Dorsolateral prefrontal cortex (tissue), 120 donors: ENCODE measurements at regions of chr2 and their contacts with region 1.

Region 1: GRCh38 chr2:85420536-85421259 is 2.2 kb downstream of the SH2D6 start:
- DNase-seq: peak; percentile 86 to 94 (median 90)
- H3K4me3 ChIP-seq: peak overlapping the region in 53 of 59 donors; percentile 1 to 55 (median 26)
- H3K27ac ChIP-seq: peak overlapping the region; percentile 67 to 99 (median 97)
- H3K27me3 ChIP-seq: no peaks in the 10 kb centered on the region
- CTCF ChIP-seq: peak; percentile 99 to 100 (median 100)

Region 2: GRCh38 chr2:85042330-85042729 is 378.4 kb before region 1 on chr2:
- intact Hi-C with region 1: no loop called
- DNase-seq: no peak
- H3K4me3 ChIP-seq: no peak overlapping the region
- H3K27ac ChIP-seq: no peak overlapping the region
- H3K27me3 ChIP-seq: no peaks in the 10 kb centered on the region
- CTCF ChIP-seq: no peak

Region 3: GRCh38 chr2:85354286-85355072 is 66.2 kb before region 1 on chr2 and contains the starts of genes ELMOD3 and RETSAT:
- intact Hi-C with region 1: loop called (anchors 2 to 5 kb)
- DNase-seq: peak; percentile 81 to 97 (median 96)
- H3K4me3 ChIP-seq: peak within 1 kb of the TSS; percentile 58 to 100 (median 88)
- H3K27ac ChIP-seq: peak within 1 kb of the TSS in 57 of 59 donors; percentile 23 to 95 (median 83)
- H3K27me3 ChIP-seq: no peaks in the 10 kb centered on the region
- CTCF ChIP-seq: peak in 41 of 56 donors; percentile 8 to 57 (median 33)
- total RNA-seq, gene ELMOD3: 17.1 to 43.7 (median 29.2) TPM
- total RNA-seq, gene RETSAT: 19.8 to 54.2 (median 39.0) TPM

Region 4: DNA sequence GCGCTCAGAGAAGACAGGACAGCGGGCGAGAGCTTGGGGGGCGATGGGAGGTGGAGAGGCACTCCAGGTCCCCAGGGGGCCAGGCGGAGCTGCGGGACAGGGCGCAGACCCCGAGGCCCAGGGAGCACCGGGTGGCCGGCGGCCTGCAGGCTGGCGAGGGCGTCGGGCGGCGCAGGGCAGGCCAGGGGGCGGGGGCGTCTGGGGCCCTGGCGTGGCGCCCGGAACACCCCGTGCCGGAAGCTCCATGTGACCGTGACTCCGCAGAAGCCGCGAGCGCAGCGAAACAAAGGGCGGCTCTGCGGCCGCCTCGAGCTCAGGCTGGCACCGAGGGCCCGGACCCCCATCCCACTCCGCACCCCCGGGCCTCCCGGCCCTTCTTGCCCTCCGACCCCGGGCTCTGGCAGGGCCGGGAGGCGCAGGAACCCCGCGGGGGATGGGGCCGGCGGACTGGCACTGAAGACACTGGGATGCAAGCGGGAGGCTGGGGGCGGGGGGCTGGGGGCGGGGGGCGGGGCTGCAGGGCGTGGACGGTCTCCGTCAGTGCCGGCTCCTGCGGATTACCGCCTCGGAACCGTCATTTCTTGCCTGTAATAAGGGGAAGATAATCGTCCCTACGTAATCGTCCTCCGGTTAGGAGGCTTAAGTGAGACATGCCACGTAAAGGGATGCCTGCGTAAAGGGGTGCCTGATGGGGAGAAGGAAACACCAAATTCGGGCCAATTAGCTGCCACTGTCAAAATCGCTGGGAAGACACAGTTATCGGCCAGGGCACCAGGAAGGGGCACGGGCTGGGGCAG is 17.0 kb after region 1 on chr2:
- intact Hi-C with region 1: loop called in 1 of 2 experiments (anchors 2 kb)
- DNase-seq: peak; percentile 63 to 93 (median 86)
- H3K4me3 ChIP-seq: peak overlapping the region; percentile 5 to 63 (median 45)
- H3K27ac ChIP-seq: peak overlapping the region; percentile 86 to 100 (median 100)
- H3K27me3 ChIP-seq: no peaks in the 10 kb centered on the region
- CTCF ChIP-seq: peak in 20 of 56 donors; percentile 4 to 31 (median 22)

Region 5: DNA sequence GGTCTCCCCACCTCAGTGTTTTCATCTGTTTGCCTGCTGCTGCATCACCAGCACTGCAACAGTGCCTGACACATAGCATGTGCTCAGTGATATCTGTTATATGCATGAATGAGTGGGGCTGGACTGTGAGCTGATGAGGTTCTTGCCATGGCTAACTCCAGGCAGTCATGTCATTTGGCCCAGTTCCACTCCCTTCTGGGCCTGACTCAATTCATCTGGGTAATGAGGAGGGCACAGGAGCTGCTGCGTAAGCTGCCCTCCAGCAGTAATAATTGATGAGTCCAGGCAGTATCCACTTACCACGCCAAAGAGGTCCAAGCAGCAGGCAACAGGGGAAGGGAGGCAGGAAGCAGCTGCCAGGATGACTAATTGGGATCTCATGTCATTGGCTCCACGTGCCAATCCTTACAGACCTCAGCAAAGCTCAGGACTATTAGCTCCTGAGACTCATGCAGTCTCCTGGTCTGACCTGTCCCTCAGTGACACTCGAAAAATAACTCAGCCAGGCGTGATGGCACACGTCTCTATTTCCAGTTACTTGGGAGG is 84.2 kb after region 1 on chr2:
- intact Hi-C with region 1: no loop called
- DNase-seq: peak in 1 of 10 donors; percentile 41
- H3K4me3 ChIP-seq: no peak overlapping the region
- H3K27ac ChIP-seq: peak overlapping the region in 1 of 59 donors; percentile 9
- H3K27me3 ChIP-seq: no peaks in the 10 kb centered on the region
- CTCF ChIP-seq: no peak

Region 6: DNA sequence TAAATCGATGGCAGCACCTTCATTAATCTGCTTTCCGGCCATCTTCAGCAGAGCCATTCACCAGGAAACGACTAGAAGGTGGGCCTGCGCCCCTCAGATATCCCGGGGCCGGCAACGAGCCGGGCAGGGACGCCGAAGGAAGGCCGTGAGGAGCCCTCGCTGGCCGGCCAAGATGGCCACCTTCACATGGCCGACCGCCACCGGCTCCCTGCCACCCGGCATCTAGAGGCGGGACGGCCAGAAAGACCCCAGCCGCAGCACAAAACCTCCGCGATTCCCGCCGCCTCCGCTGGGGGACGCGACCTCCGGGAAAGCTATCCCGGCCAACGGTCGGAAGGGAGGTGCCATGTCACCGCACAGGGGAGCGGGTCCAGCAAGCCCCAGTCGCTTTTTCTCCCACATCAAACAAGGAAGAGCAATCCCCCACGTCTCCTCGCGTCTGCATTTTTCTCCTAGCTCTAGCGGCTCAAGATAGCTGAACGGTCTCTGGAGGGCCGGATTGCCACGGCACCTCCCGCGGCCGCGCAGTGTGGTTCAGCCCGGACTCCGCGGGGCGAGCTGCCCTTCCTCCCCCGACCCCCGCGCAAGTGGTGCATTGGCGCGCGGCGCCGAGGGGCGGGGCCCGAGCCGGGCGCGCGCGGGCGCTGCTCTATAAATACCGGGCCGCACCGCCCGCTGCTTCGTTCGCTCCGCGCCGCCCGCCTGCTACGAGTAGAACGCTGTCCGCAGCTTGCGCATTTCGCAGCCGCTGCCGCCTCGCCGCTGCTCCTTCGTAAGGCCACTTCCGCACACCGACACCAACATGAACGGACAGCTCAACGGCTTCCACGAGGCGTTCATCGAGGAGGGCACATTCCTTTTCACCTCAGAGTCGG is 118.0 kb after region 1 on chr2 and contains the start of gene MAT2A:
- intact Hi-C with region 1: loop called (anchors 1 kb)
- DNase-seq: peak; percentile 83 to 95 (median 90)
- H3K4me3 ChIP-seq: peak within 1 kb of the TSS; percentile 76 to 100 (median 96)
- H3K27ac ChIP-seq: peak within 1 kb of the TSS; percentile 95 to 100 (median 100)
- H3K27me3 ChIP-seq: no peaks in the 10 kb centered on the region
- CTCF ChIP-seq: peak; percentile 53 to 87 (median 72)
- total RNA-seq, gene MAT2A: 193 to 562 (median 276) TPM

Region 7: DNA sequence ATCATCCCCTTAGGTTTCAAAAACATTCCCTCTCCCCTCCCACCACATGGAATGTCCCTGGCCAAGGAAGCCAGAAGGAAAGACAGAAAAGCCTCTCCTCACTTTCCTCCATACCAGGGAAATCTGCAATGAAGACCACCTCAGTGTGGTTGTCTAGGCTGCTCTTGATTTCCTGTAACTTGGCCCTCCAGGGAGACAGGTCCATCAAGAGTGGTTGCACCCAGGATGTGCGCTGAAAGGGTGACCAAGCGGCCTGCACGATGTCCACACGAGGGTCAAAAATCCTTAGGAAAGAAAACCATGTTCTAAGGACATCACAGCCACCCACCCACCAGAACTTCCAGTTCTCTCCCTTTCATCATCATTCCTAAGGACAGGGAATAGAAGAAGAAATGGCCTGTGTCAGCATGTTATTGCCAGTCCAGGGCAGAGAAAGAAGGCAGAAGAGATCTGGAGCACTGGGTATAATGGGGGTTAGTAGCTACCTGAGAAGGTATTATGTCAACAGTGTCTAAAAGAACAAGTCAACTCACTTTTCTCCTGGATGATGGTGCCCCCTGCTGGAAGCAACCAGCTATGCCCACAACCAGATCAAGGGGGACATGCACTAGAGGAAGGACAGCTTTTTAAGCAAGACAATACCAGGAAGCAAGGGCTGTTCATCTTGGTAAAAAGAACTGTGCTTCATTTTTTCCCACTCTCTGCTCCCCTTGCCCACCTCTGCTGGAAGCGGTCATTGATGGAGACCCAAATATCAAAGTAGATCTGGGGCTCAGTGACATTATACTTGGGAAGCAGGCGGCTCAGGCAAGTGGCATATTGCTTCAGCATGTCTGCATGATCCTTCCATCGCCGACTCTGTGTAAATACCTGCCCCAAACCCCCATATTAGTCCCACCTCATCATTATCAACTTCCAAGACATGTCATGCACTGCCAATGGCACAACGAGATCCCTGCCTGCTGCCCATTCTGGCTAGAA is 131.3 kb after region 1 on chr2:
- intact Hi-C with region 1: loop called (anchors 1 to 2 kb)
- DNase-seq: peak; percentile 65 to 88 (median 80)
- H3K4me3 ChIP-seq: no peak overlapping the region
- H3K27ac ChIP-seq: peak overlapping the region in 49 of 59 donors; percentile 13 to 73 (median 50)
- H3K27me3 ChIP-seq: no peaks in the 10 kb centered on the region
- CTCF ChIP-seq: peak; percentile 84 to 99 (median 96)

Region 8: GRCh38 chr2:85602476-85603234 is 182.0 kb after region 1 on chr2 and contains the start of gene TMEM150A:
- intact Hi-C with region 1: loop called in 1 of 2 experiments (anchors 5 kb)
- DNase-seq: peak; percentile 87 to 97 (median 94)
- H3K4me3 ChIP-seq: peak within 1 kb of the TSS; percentile 66 to 96 (median 84)
- H3K27ac ChIP-seq: peak within 1 kb of the TSS; percentile 18 to 93 (median 84)
- H3K27me3 ChIP-seq: no peaks in the 10 kb centered on the region
- CTCF ChIP-seq: peak in 48 of 56 donors; percentile 8 to 69 (median 41)
- total RNA-seq, gene TMEM150A: 5.8 to 22.7 (median 10.9) TPM

Region 9: DNA sequence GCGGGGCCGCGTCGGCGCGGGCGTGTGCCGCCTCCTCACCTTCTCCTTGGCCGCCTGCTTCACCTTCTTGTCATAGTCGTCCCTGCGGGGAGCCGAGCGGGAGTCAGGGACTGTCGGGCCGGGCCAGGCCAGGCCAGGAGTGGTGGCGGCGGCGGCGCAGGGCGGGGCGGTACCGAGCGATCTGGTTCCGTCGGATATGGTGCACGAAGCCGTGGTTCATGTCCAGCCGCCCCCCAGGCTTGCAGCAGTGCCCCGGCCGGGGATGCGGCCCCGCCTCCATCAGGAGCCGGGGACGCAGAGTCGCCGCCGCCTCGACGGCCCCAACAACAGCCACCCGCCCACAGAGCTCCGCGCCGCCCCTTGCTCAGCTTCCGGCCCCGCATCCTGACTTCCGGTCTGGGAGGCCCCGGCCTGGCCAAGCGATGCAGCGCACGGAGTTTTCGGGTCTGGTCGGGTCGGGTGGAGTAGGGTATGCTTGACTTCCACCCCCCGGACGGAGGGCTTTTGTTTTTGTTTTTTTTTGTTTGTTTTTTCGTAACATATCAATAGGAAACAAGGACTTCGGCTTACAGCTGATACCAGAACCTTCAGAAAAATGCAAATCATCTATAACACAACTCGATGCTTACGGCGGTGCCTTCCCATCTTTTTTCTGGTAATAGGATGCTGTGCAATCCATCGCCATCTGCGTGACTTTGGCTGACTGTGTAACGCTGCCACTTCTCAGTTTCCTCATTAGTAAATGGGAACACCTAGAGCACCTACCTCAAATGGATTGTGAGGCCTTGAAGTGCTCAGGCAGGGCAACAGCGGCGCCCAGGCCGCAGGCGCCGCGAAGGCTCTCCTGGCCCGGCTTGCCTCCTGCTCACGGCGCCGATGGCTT is 191.2 kb after region 1 on chr2 and contains the start of gene C2orf68:
- intact Hi-C with region 1: loop called in 1 of 2 experiments (anchors 5 kb)
- DNase-seq: peak; percentile 77 to 95 (median 85)
- H3K4me3 ChIP-seq: peak within 1 kb of the TSS; percentile 63 to 97 (median 86)
- H3K27ac ChIP-seq: peak within 1 kb of the TSS; percentile 36 to 92 (median 84)
- H3K27me3 ChIP-seq: no peaks in the 10 kb centered on the region
- CTCF ChIP-seq: peak in 20 of 56 donors; percentile 8 to 44 (median 18)
- total RNA-seq, gene C2orf68: 10.2 to 50.7 (median 21.9) TPM